Transverse colon (tissue), 4 donors: ENCODE measurements at regions of chr18 and their contacts with region 1.

Region 1: DNA sequence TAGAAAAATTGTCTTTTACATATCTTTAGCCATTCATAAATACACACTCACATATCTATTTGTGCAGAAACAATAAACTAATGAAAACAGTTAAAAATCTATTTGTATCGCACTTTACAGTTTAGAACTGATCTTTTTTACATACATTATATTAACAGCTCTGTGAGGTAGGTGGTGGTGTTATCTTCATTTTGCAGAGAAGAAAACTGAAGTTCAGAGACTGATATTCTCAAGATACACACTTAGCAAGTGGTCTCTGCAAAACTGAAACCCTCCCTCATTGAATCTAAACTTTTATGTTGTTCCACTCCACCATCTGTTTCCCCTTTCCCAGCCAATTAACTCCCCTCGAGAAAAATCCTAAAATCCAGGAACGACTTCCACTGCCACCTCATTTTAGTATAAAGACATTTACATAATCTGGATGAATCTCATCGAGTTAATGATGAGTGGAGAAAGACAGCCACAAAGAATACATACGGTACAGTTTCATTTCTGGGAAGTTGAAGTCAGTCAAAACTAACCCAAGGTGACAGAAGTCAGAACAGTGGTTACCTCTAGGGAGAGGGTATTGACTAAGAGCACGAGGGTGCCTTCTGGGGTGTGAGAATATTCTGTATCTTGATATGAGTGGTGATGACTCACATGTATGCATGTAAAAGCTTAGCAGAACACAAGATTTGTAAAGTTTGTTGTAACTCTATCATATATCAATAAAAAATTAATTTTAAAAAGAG is 524.2 kb upstream of the TCF4 start:
- DNase-seq: no peak
- H3K4me3 ChIP-seq: no peak overlapping the region
- H3K27ac ChIP-seq: no peak overlapping the region
- H3K4me1 ChIP-seq: no peaks in the 10 kb centered on the region
- H3K27me3 ChIP-seq: no peaks in the 10 kb centered on the region
- CTCF ChIP-seq: no peak
- EP300 ChIP-seq: no peak
- POLR2A ChIP-seq: no peak

Region 2: DNA sequence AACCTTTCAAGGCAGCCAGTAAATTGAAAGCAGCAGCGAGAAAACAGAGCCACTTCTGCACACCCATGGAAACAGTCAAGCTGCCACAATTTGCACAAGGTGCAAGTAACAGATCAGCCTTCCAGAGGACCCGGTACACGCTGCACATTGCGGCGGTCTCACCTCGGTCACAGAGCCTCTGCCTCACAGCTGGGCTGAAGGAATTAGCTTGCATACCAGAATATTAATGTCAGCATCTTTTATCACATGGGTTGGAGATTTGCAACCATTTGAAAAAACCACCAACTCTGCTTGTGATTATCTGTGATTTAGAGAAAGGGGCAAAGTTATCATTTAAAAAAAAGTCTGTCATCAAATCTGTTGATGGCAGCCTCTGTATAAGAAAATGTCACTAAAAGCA is 193.7 kb before region 1 on chr18:
- in situ Hi-C with region 1: no loop called
- intact Hi-C with region 1: no loop called
- DNase-seq: no peak
- H3K4me3 ChIP-seq: no peak overlapping the region
- H3K27ac ChIP-seq: no peak overlapping the region
- H3K4me1 ChIP-seq: no peaks in the 10 kb centered on the region
- H3K27me3 ChIP-seq: no peaks in the 10 kb centered on the region
- CTCF ChIP-seq: no peak
- EP300 ChIP-seq: no peak
- POLR2A ChIP-seq: no peak

Region 3: DNA sequence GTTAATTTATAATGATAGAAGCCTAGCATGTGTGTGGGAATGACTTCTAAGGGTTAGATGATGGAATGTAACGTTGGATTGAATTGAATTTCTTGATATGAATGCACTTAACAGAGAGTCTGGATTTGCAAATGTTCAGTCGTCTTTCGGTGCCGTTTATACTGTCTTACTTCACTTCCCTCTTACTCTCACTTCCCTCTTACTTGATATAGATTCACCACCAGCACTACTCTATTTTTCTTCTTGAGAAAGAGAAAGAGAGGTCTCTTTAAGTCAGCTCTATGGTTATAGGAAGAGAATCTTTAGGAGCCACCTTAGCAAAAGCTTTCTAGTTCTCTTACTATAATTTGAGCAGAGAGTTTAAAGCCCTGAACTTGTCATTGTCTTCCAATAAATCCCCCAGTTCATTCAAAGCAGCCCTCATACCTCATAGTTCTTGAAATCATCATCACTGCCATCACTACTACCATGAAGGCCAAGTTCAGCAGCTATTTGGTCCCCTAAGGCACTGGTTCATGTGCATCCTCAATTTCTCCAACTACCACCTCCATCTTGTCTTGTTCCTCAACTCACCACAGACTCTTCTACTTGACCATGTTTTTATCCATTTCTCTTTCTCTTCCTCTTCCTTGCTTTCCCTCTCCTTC is 22.4 kb before region 1 on chr18:
- in situ Hi-C with region 1: no loop called
- intact Hi-C with region 1: no loop called
- DNase-seq: no peak
- H3K4me3 ChIP-seq: no peak overlapping the region
- H3K27ac ChIP-seq: no peak overlapping the region
- H3K4me1 ChIP-seq: no peaks in the 10 kb centered on the region
- H3K27me3 ChIP-seq: no peaks in the 10 kb centered on the region
- CTCF ChIP-seq: no peak
- EP300 ChIP-seq: no peak
- POLR2A ChIP-seq: no peak

Region 4: GRCh38 chr18:56200381-56200911 is 88.3 kb after region 1 on chr18:
- in situ Hi-C with region 1: loop called in 1 of 4 experiments (anchors 25 kb)
- intact Hi-C with region 1: no loop called
- DNase-seq: no peak
- H3K4me3 ChIP-seq: no peak overlapping the region
- H3K27ac ChIP-seq: peak overlapping the region in 2 of 4 donors; percentile 1 to 14
- H3K4me1 ChIP-seq: no peaks in the 10 kb centered on the region
- H3K27me3 ChIP-seq: no peaks in the 10 kb centered on the region
- CTCF ChIP-seq: no peak
- EP300 ChIP-seq: no peak
- POLR2A ChIP-seq: no peak